ENCODE measurements at regions of chr7 and their contacts with region 1.

Region 1: GRCh38 chr7:44218418-44219201 is 17.8 kb downstream of the YKT6 start:
- DNase-seq: no peak
- H3K4me3 ChIP-seq: no peak overlapping the region
- H3K27ac ChIP-seq: no peak overlapping the region
- H3K4me1 ChIP-seq: no peaks in the 10 kb centered on the region
- H3K27me3 ChIP-seq: no peaks in the 10 kb centered on the region
- CTCF ChIP-seq: no peak

Region 2: GRCh38 chr7:44097064-44097932 is 121.3 kb before region 1 on chr7:
- CTCF ChIA-PET with region 1: no interaction called
- dilution Hi-C with region 1: loop called (anchors 5 kb)
- in situ Hi-C with region 1: no loop called
- intact Hi-C with region 1: no loop called
- DNase-seq: no peak
- H3K4me3 ChIP-seq: no peak overlapping the region
- H3K27ac ChIP-seq: no peak overlapping the region
- H3K4me1 ChIP-seq: peaks cover 4% of the 10 kb centered on the region
- H3K27me3 ChIP-seq: no peaks in the 10 kb centered on the region
- CTCF ChIP-seq: no peak

Region 3: GRCh38 chr7:44257618-44258422 is 39.2 kb after region 1 on chr7:
- CTCF ChIA-PET with region 1: no interaction called
- dilution Hi-C with region 1: no loop called
- in situ Hi-C with region 1: no loop called
- intact Hi-C with region 1: no loop called
- DNase-seq: peak; percentile 66
- H3K4me3 ChIP-seq: no peak overlapping the region
- H3K27ac ChIP-seq: no peak overlapping the region
- H3K4me1 ChIP-seq: peaks cover 33% of the 10 kb centered on the region
- H3K27me3 ChIP-seq: no peaks in the 10 kb centered on the region
- CTCF ChIP-seq: no peak

Region 4: GRCh38 chr7:44267719-44268421 is 49.3 kb after region 1 on chr7:
- CTCF ChIA-PET with region 1: no interaction called
- dilution Hi-C with region 1: loop called (anchors 5 kb)
- in situ Hi-C with region 1: no loop called
- intact Hi-C with region 1: no loop called
- DNase-seq: no peak
- H3K4me3 ChIP-seq: no peak overlapping the region
- H3K27ac ChIP-seq: no peak overlapping the region
- H3K4me1 ChIP-seq: peaks cover 19% of the 10 kb centered on the region
- H3K27me3 ChIP-seq: no peaks in the 10 kb centered on the region
- CTCF ChIP-seq: no peak

Measured in mammary epithelial cell (primary cell).